MCF 10A (cell line): ENCODE measurements at regions of chr10 and their contacts with region 1.

Region 1: DNA sequence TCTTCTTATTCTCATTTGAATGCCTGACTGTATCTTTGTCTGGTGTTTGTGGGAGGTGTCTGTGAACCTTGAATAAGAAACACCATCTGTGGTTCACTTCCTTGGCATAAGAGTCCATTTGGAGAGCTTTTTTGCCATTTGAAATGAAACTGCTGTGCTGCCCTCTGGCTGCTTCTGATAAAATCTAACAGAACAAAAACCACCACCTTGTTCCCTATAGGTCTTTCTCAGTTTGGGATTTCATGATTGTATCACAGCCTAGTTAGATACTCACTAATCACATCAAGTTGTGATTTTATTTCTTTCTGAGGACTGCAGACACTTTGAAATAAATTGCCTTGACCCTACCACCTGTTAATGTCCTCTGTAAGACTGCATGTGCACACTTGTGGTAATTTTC is 102.7 kb upstream of the FAM13C start:
- DNase-seq: peak; percentile 36
- H3K4me3 Mint-ChIP-seq: no peak overlapping the region
- H3K27ac Mint-ChIP-seq: no peak overlapping the region
- H3K4me1 Mint-ChIP-seq: no peaks in the 10 kb centered on the region
- H3K27me3 Mint-ChIP-seq: peaks cover 28% of the 10 kb centered on the region
- CTCF ChIP-seq: no peak

Region 2: GRCh38 chr10:58781873-58782488 is 683.1 kb before region 1 on chr10:
- CTCF ChIA-PET with region 1: interaction called, 3 read pairs
- POLR2A ChIA-PET with region 1: no interaction called
- intact Hi-C with region 1: loop called (anchors 10 kb)
- DNase-seq: peak; percentile 59
- H3K4me3 Mint-ChIP-seq: no peak overlapping the region
- H3K27ac Mint-ChIP-seq: no peak overlapping the region
- H3K4me1 Mint-ChIP-seq: peaks cover 22% of the 10 kb centered on the region
- H3K27me3 Mint-ChIP-seq: no peaks in the 10 kb centered on the region
- CTCF ChIP-seq: peak; percentile 52

Region 3: DNA sequence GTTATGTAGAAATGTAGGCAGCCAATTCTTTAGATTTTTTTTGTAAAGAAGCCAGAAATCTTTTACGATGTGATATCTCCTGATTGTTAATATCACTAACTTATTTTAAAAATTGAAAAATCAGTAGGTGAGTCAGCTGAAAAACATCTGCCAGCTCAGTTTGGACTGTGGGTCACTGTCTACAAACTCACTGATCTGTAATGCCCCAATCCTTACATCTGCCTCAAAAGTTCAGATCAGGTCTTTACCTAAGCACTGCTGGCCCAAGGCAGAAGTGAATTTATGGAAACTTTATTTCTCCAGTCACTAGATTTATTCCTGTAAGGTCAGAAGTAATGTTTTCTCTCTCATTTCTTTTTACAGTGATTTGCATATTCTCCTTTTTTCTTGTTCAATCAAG is 71.7 kb before region 1 on chr10:
- CTCF ChIA-PET with region 1: no interaction called
- POLR2A ChIA-PET with region 1: no interaction called
- intact Hi-C with region 1: no loop called
- DNase-seq: no peak
- H3K4me3 Mint-ChIP-seq: no peak overlapping the region
- H3K27ac Mint-ChIP-seq: no peak overlapping the region
- H3K4me1 Mint-ChIP-seq: peaks cover under 1% of the 10 kb centered on the region
- H3K27me3 Mint-ChIP-seq: peaks cover 11% of the 10 kb centered on the region
- CTCF ChIP-seq: no peak

Region 4: GRCh38 chr10:59606551-59606961 is 141.5 kb after region 1 on chr10:
- CTCF ChIA-PET with region 1: no interaction called
- POLR2A ChIA-PET with region 1: no interaction called
- intact Hi-C with region 1: no loop called
- DNase-seq: peak; percentile 79
- H3K4me3 Mint-ChIP-seq: no peak overlapping the region
- H3K27ac Mint-ChIP-seq: no peak overlapping the region
- H3K4me1 Mint-ChIP-seq: peaks cover 10% of the 10 kb centered on the region
- H3K27me3 Mint-ChIP-seq: no peaks in the 10 kb centered on the region
- CTCF ChIP-seq: no peak